ENCODE measurements at regions of chr3 and their contacts with region 1.

Region 1: DNA sequence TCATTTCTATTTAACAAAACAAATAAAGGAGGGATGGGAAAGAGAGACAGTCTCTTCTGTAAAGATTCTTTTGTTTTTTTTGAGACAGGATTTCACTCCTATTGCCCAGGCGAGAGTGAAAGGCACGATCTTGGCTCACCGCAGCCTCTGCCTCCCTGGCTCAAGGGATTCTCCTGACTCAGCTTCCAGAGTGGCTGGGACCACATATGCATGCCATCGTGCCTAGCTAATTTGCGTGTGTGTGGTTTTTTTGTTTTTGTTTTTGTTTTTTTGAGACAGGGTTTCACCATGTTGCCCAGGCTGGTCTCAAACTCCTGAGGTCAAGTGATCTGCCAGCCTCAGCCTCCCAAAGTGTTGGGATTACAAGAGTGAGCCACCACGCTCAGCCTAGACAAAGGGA is 23.3 kb downstream of the STAG1 start:
- DNase-seq: no peak
- H3K4me3 ChIP-seq: no peak overlapping the region
- H3K27ac ChIP-seq: peak overlapping the region in 3 of 4 donors; percentile 45 to 64 (median 49)
- H3K4me1 ChIP-seq: peaks cover 25 to 80% (median 43%) of the 10 kb centered on the region in 4 donors
- H3K27me3 ChIP-seq: no peaks in the 10 kb centered on the region
- CTCF ChIP-seq: no peak
- EP300 ChIP-seq: no peak
- POLR2A ChIP-seq: no peak

Region 2: GRCh38 chr3:135728007-135728721 is 1000.8 kb before region 1 on chr3:
- in situ Hi-C with region 1: no loop called
- intact Hi-C with region 1: no loop called
- DNase-seq: no peak
- H3K4me3 ChIP-seq: no peak overlapping the region
- H3K27ac ChIP-seq: no peak overlapping the region
- H3K4me1 ChIP-seq: no peaks in the 10 kb centered on the region
- H3K27me3 ChIP-seq: no peaks in the 10 kb centered on the region
- CTCF ChIP-seq: no peak
- EP300 ChIP-seq: no peak
- POLR2A ChIP-seq: no peak

Region 3: DNA sequence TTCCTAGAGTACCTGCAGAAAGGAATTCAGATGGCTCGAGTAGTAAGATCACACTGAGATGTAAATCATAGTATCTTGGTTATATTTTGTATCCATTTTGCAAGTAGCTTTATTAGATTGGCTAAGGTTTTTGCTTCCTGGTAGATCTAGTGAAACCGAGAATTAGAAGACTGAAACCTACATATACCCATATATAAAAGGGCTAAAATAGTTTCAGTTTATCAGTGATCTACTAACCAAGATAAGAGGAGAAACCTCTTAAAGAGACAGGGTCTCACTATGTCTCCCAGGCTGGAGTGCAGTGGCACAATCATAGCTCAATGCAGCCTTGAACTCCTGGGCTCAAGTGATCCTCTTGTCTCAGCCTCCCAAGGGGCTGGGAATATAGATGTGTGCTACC is 343.5 kb before region 1 on chr3:
- in situ Hi-C with region 1: loop called in 1 of 4 experiments (anchors 25 kb)
- intact Hi-C with region 1: no loop called
- DNase-seq: no peak
- H3K4me3 ChIP-seq: no peak overlapping the region
- H3K27ac ChIP-seq: no peak overlapping the region
- H3K4me1 ChIP-seq: no peaks in the 10 kb centered on the region
- H3K27me3 ChIP-seq: no peaks in the 10 kb centered on the region
- CTCF ChIP-seq: no peak
- EP300 ChIP-seq: no peak
- POLR2A ChIP-seq: no peak

Region 4: DNA sequence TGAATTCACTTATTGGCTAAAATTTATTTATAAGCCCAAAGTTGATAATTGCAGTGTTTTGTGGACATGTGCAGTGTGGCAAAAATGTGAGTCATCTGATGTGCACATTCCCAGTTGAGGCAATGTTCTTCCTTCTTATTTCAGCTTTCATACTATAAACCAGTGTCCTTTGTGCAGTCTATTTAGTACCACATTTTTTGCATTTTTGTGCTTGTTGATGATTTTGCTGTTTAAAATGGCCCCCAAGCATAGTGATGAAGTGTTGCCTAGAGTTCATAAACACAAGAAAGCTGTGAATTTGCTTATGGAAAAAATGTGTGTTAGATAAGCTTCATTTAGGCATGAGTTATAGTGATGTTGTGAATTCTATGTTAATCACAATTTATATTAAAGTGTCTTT is 209.4 kb after region 1 on chr3:
- in situ Hi-C with region 1: no loop called
- intact Hi-C with region 1: no loop called
- DNase-seq: no peak
- H3K4me3 ChIP-seq: no peak overlapping the region
- H3K27ac ChIP-seq: no peak overlapping the region
- H3K4me1 ChIP-seq: peaks cover 0 to 47% (median 22%) of the 10 kb centered on the region in 4 donors
- H3K27me3 ChIP-seq: no peaks in the 10 kb centered on the region
- CTCF ChIP-seq: no peak
- EP300 ChIP-seq: no peak
- POLR2A ChIP-seq: no peak

Region 5: GRCh38 chr3:136955813-136956212 is 226.9 kb after region 1 on chr3:
- in situ Hi-C with region 1: no loop called
- intact Hi-C with region 1: no loop called
- DNase-seq: peak; percentile 67
- H3K4me3 ChIP-seq: no peak overlapping the region
- H3K27ac ChIP-seq: peak overlapping the region; percentile 34 to 73 (median 68)
- H3K4me1 ChIP-seq: peaks cover 0 to 44% (median 17%) of the 10 kb centered on the region in 4 donors
- H3K27me3 ChIP-seq: no peaks in the 10 kb centered on the region
- CTCF ChIP-seq: no peak
- EP300 ChIP-seq: no peak
- POLR2A ChIP-seq: peak; percentile 33

Region 6: GRCh38 chr3:137163241-137163871 is 434.4 kb after region 1 on chr3:
- in situ Hi-C with region 1: no loop called
- intact Hi-C with region 1: no loop called
- DNase-seq: no peak
- H3K4me3 ChIP-seq: no peak overlapping the region
- H3K27ac ChIP-seq: peak overlapping the region; percentile 30 to 50 (median 44)
- H3K4me1 ChIP-seq: peaks cover 0 to 9% (median 0%) of the 10 kb centered on the region in 4 donors
- H3K27me3 ChIP-seq: no peaks in the 10 kb centered on the region
- CTCF ChIP-seq: no peak
- EP300 ChIP-seq: no peak
- POLR2A ChIP-seq: no peak

Measured in transverse colon (tissue), 4 donors.